ENCODE measurements at regions of chr9 and their contacts with region 1.

Region 1: GRCh38 chr9:37913480-37914153 is 9.7 kb upstream of the SLC25A51 start:
- DNase-seq: peak; percentile 88
- H3K4me3 ChIP-seq: no peak overlapping the region
- H3K27ac ChIP-seq: no peak overlapping the region
- H3K4me1 ChIP-seq: no peaks in the 10 kb centered on the region
- H3K27me3 ChIP-seq: no peaks in the 10 kb centered on the region
- CTCF ChIP-seq: peak; percentile 99

Region 2: GRCh38 chr9:38068866-38069629 is 155.4 kb after region 1 on chr9 and contains the start of gene SHB:
- intact Hi-C with region 1: loop called (anchors 5 kb)
- DNase-seq: peak; percentile 81
- H3K4me3 ChIP-seq: peak within 1 kb of the TSS; percentile 98
- H3K27ac ChIP-seq: peak within 1 kb of the TSS; percentile 92
- H3K4me1 ChIP-seq: peaks cover 13% of the 10 kb centered on the region
- H3K27me3 ChIP-seq: no peaks in the 10 kb centered on the region
- CTCF ChIP-seq: no peak
- total RNA-seq, gene SHB: 17.4 to 24.0 TPM

Region 3: GRCh38 chr9:38088006-38088925 is 174.6 kb after region 1 on chr9:
- intact Hi-C with region 1: loop called (anchors 5 kb)
- DNase-seq: peak; percentile 84
- H3K4me3 ChIP-seq: no peak overlapping the region
- H3K27ac ChIP-seq: no peak overlapping the region
- H3K4me1 ChIP-seq: no peaks in the 10 kb centered on the region
- H3K27me3 ChIP-seq: no peaks in the 10 kb centered on the region
- CTCF ChIP-seq: peak; percentile 98

Region 4: DNA sequence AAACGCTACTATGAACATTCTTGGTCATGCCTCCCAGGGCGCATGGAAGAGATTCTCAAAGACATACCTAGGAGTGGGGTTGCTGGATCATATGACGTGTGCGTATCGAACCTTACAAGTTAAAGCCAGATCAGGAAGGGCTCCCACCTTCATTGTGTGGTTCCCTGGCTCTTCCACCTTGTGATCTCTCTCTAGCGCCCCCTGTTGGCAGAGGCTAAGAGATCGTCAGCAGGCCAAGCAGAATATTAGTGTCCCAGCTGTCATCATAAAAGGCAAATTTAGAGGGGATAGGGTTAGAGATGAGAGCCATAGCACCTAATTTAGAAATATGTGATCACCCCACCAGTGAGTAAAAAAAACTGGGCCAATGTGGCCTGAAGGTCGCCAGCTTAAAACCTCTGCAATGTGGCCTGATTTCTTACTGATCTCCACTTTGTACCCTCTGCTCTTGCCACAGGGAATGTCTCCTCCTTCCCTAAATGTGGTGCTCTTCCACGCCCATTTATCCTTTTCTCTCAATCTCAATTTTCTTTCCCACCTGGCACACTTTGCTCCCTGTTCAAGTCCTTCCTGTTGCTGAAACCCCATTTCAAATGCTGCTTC is 247.1 kb after region 1 on chr9:
- intact Hi-C with region 1: loop called (anchors 2 kb)
- DNase-seq: peak; percentile 77
- H3K4me3 ChIP-seq: no peak overlapping the region
- H3K27ac ChIP-seq: no peak overlapping the region
- H3K4me1 ChIP-seq: no peaks in the 10 kb centered on the region
- H3K27me3 ChIP-seq: no peaks in the 10 kb centered on the region
- CTCF ChIP-seq: peak; percentile 80

Region 5: GRCh38 chr9:38362852-38363593 is 449.4 kb after region 1 on chr9:
- intact Hi-C with region 1: loop called (anchors 5 kb)
- DNase-seq: no peak
- H3K4me3 ChIP-seq: no peak overlapping the region
- H3K27ac ChIP-seq: no peak overlapping the region
- H3K4me1 ChIP-seq: no peaks in the 10 kb centered on the region
- H3K27me3 ChIP-seq: no peaks in the 10 kb centered on the region
- CTCF ChIP-seq: peak; percentile 48

Region 6: GRCh38 chr9:38408719-38409118 is 495.1 kb after region 1 on chr9:
- intact Hi-C with region 1: loop called (anchors 10 kb)
- DNase-seq: no peak
- H3K4me3 ChIP-seq: no peak overlapping the region
- H3K27ac ChIP-seq: no peak overlapping the region
- H3K4me1 ChIP-seq: no peaks in the 10 kb centered on the region
- H3K27me3 ChIP-seq: no peaks in the 10 kb centered on the region
- CTCF ChIP-seq: no peak